Right ventricle myocardium inferior (tissue), 1 donor: ENCODE measurements at regions of chr6 and their contacts with region 1.

Region 1: DNA sequence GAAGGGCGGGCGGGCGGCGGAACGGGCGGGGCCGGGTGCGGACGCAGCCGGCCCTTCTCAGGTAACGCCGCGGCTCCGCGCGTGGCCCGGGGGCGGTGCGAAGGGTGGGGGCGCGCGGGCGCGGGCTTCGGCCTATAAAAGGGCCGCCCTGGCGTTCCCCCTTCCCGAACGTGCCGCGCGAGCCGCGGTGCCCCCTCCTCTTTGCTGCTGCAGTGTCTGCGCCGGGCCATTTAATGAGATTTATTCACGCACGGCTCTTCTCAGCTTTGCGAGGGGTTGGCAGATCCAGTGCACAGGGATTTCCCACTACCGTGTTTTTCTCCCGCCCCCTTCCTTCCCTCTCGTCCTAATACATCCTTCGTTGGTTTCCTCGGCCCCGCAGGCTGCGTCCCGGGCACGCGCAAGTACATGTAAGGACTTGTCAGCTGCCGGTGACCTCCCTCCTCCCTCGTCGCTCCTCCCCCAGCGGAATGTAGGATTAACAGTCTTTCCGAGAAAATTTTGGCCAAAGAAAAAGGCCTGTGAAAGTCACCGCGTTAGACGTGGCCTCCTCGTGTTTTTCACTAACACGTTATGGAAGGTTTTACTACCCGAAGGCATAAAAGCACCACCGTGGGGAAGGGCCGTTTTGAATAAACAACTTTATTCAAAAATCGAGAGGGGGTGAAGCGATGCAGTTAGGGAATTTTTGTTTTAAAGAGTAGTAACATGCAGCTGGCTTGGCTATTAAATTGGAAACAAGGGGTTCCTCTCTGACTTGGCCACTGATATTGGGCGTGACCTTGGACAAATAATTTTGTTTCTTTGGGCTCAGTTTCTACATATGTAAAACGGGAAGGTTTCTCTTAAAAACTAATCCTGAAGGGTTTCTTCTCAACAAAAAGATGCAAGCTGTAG is 966 bp upstream of the REV3L start:
- DNase-seq: peak; percentile 98
- ATAC-seq: peak; percentile 91

Region 2: DNA sequence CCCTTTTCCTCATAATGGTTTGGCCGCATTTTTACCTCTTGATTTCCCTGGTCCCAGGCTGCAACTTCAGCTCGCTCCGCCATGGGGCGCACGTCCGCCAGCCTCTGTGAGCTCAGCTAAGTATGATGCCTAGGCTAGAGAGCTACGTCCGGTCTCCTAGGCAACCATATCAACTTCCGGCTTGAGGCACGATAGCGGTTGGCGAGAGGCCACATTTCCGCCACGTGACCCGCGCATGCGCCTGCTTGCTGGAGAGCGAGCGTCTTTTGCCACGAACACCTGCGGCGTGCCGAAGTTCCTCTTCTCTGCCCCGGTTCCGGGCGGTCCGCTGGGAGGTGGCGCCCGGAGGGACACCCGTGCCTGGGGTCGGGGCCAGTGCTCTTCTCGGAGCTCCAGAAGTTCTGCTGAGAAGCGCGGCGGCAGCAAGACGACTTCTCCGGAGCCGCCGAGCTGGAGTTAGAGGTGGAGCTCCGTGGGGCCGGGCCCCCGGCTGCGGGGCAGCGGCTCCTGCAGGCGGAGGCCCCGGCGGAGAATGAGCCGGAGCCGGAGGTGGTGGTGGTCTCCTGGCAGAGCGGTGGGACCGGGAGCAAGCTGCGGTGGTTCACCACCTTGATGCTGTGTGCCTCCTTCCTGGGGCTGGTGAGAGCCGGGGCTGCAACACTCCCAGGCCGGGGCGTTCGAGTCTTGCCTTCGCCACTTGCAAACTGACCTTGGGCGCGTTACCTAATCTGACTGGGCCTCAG is 224.7 kb before region 1 on chr6:
- intact Hi-C with region 1: loop called (anchors 5 kb)
- DNase-seq: peak; percentile 99
- ATAC-seq: peak; percentile 99

Region 3: DNA sequence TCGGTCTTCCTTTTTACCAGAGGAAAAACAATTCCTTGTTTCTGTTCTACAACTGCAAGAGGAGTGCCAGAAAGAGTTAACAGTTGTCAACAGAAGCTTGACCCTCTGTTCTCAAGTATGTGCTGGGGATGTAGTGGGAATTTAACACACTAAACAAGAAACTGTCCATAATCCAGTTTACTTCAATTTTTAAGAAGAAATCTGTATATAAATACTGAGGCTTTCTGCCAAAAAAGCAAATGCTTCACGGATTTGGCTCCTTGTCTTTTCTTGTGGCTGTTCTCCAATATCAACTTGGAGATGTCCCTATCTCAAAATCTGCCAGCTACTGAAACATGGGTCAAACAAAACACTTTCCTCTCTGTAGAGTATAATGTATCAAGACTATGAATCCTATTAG is 27.8 kb before region 1 on chr6:
- intact Hi-C with region 1: no loop called
- DNase-seq: no peak
- ATAC-seq: no peak

Region 4: GRCh38 chr6:111534231-111534751 is 50.3 kb after region 1 on chr6:
- intact Hi-C with region 1: loop called (anchors 5 kb)
- DNase-seq: peak; percentile 79
- ATAC-seq: peak; percentile 90

Region 5: DNA sequence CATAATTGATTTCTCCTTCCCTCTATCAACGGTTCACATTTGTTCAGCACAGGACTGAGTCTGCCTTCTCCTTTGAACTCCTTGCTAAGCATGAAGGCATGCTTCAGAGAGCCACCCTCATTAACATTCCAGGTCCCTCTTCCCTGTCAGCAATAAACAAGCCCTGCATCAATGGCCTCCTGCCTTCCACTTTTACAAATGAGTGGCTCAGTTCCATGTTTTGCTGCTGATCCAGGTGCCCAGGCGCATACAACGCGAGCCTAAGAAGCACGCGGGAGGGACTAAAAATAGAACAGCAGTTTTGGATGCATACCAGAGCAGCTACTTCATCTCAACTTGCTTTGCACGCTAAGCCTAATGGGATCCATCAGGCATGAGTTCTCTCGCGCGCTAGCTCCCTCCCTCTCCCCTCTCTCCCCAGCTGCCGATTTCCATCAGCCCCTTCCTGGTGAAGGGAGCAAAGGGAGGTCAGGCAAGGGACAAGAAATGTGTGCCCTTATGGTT is 68.3 kb after region 1 on chr6:
- intact Hi-C with region 1: loop called (anchors 5 kb)
- DNase-seq: no peak
- ATAC-seq: peak; percentile 88

Region 6: GRCh38 chr6:111605100-111605751 is 121.2 kb after region 1 on chr6:
- intact Hi-C with region 1: loop called (anchors 1 kb)
- DNase-seq: peak; percentile 89
- ATAC-seq: peak; percentile 73

Region 7: GRCh38 chr6:111625461-111626391 is 141.7 kb after region 1 on chr6:
- intact Hi-C with region 1: loop called (anchors 5 kb)
- DNase-seq: no peak
- ATAC-seq: peak; percentile 74

Region 8: DNA sequence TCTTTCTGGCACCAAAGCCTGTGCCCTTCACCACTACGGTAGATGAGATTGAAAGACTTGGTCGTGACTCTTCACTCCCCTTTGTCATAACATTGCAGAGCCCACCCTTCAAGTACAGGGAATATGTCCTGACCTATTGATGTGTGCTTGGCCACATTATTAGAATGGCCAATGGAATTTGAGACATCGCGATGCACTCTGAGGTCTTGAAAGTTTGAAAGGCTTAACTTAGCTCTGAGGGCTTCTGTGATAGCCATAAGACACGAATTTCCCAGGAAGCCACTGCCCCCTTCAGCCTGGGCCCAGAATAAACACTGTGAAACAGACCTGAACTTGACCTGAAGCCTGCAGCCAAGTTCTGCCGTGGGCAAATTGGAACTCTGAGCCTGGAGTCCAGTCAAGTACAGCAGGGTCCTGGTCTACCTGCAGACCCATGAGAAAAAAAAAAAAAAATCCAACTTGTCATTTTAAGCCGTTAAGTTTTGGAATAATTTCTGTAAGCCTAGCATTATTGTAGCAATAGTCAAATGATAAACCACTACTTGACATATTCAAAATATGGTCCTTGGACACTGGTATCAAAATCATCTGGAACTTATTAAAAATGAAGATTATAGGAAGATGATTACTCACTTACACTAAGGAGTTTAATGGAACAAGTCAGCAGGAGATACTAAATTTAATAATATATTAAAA is 158.6 kb after region 1 on chr6:
- intact Hi-C with region 1: loop called (anchors 1 kb)
- DNase-seq: no peak
- ATAC-seq: peak; percentile 87